Activated CD8-positive, alpha-beta T cell treated with anti-CD3 and anti-CD28 coated beads, Interleukin-2, amount 10 ng/mL, durations not matched to agents 7 days and 5 days (primary cell): ENCODE measurements at regions of chr10 and their contacts with region 1.

Region 1: GRCh38 chr10:131885391-131886161 is 15.2 kb upstream of the PPP2R2D start:
- DNase-seq: peak; percentile 83
- ATAC-seq: peak; percentile 99
- H3K4me3 Mint-ChIP-seq: no peak overlapping the region
- H3K27ac Mint-ChIP-seq: no peak overlapping the region
- H3K4me1 Mint-ChIP-seq: peaks cover 3% of the 10 kb centered on the region
- H3K27me3 Mint-ChIP-seq: peaks cover 4% of the 10 kb centered on the region

Region 2: GRCh38 chr10:131900350-131901146 is 15.0 kb after region 1 on chr10 and contains the start of gene PPP2R2D:
- CTCF ChIA-PET with region 1: interaction called, 20 read pairs
- POLR2A ChIA-PET with region 1: no interaction called
- DNase-seq: peak; percentile 95
- ATAC-seq: peak; percentile 89
- H3K4me3 Mint-ChIP-seq: peak within 1 kb of the TSS; percentile 90
- H3K27ac Mint-ChIP-seq: peak within 1 kb of the TSS; percentile 86
- H3K4me1 Mint-ChIP-seq: peaks cover 68% of the 10 kb centered on the region
- H3K27me3 Mint-ChIP-seq: peaks cover 12% of the 10 kb centered on the region
- total RNA-seq, gene PPP2R2D: 36.5 to 37.5 TPM

Region 3: GRCh38 chr10:131921184-131921583 is 35.6 kb after region 1 on chr10:
- CTCF ChIA-PET with region 1: no interaction called
- POLR2A ChIA-PET with region 1: no interaction called
- DNase-seq: no peak
- ATAC-seq: no peak
- H3K4me3 Mint-ChIP-seq: no peak overlapping the region
- H3K27ac Mint-ChIP-seq: no peak overlapping the region
- H3K4me1 Mint-ChIP-seq: peaks cover 10% of the 10 kb centered on the region
- H3K27me3 Mint-ChIP-seq: no peaks in the 10 kb centered on the region

Region 4: GRCh38 chr10:131943021-131943814 is 57.6 kb after region 1 on chr10:
- CTCF ChIA-PET with region 1: interaction called, 16 read pairs
- POLR2A ChIA-PET with region 1: no interaction called
- DNase-seq: no peak
- ATAC-seq: no peak
- H3K4me3 Mint-ChIP-seq: no peak overlapping the region
- H3K27ac Mint-ChIP-seq: no peak overlapping the region
- H3K4me1 Mint-ChIP-seq: no peaks in the 10 kb centered on the region
- H3K27me3 Mint-ChIP-seq: no peaks in the 10 kb centered on the region

Region 5: DNA sequence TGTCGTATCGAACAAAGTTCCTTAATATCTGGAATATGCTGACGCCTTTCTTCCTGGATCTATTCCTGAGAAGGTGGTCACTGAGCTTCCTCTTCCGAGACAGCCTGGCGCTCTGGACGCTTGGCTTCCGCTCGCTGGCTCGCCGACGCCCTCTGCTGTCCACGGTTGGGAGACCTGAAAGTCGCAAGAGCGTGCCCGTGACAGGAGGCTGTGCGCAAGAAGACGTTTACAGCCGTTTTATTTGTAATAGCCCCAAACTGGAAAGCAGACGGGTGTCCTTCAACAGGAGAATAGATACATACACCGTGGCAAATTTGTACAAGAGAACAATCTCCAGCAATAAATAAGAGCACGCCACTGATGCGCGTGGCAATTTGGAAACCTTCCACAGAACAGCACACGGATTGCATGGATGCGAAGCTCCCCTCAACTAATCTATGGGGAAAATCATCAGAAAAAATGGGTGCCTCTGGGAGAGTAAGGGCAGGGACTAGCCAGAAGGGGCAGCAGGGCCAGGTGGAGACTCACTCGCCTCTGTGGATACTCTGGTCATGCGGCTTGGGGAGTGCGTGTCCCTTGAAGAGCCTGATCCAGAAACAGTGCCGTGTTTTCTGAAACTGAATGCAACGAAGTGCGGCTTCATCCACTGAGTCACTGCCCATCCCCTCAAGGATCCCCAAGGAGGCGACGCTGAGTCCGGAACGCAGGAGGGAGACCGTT is 137.7 kb after region 1 on chr10:
- CTCF ChIA-PET with region 1: interaction called, 88 read pairs
- POLR2A ChIA-PET with region 1: interaction called, 3 read pairs
- DNase-seq: peak; percentile 83
- ATAC-seq: peak; percentile 89
- H3K4me3 Mint-ChIP-seq: no peak overlapping the region
- H3K27ac Mint-ChIP-seq: no peak overlapping the region
- H3K4me1 Mint-ChIP-seq: peaks cover 6% of the 10 kb centered on the region
- H3K27me3 Mint-ChIP-seq: peaks cover 14% of the 10 kb centered on the region